ENCODE measurements at regions of chr6 and their contacts with region 1.

Region 1: DNA sequence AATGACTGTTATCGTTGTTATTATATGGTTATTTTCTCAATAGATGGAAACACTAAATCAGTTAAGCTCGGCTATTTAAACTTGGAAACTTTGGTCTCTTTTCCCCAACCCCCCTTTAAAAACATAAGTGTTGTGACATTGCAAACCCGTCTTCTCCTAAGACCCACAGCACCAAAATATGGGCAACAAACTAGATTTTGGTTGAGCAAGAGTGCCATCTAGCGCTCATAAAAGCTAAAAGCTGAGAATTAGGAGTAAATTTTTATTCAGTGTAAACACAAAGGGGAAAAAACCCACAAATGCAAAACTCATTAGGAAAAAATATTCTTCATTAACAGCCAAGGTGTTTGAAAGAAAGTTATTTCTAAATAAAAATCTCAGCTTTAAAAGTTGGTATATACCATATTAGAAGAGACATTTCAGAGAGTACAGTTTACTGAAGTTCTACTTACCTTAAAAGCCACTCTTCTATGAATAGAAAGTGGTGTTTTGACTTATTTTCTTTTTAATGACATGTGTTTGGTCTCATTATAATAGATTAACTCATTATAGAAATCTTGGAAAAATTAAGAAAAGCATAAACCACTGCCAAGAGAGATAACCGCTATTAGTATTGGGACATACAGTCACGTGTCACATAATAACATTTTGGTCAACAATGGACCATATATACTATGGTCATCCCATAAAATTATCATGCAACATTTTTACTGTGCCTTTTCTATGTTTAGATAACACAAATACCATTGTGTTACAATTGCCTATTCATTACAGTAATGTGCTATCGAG is 21.1 kb downstream of the SESN1 start:
- H3K4me3 ChIP-seq: no peak overlapping the region
- H3K27ac ChIP-seq: no peak overlapping the region
- H3K4me1 ChIP-seq: peaks cover 30% of the 10 kb centered on the region
- CTCF ChIP-seq: peak; percentile 37; the same call in 1 of the 2 replicates

Region 2: GRCh38 chr6:108541838-108542759 is 531.4 kb before region 1 on chr6:
- CTCF ChIA-PET with region 1: interaction called, 156 read pairs
- POLR2A ChIA-PET with region 1: interaction called, 3 read pairs
- H3K4me3 ChIP-seq: no peak overlapping the region
- H3K27ac ChIP-seq: no peak overlapping the region
- H3K4me1 ChIP-seq: no peaks in the 10 kb centered on the region
- CTCF ChIP-seq: peak; percentile 92

Region 3: GRCh38 chr6:108782179-108783041 is 291.1 kb before region 1 on chr6:
- CTCF ChIA-PET with region 1: interaction called, 11 read pairs
- POLR2A ChIA-PET with region 1: no interaction called
- H3K4me3 ChIP-seq: peak overlapping the region; percentile 40
- H3K27ac ChIP-seq: no peak overlapping the region; the same call in 1 of the 2 replicates
- H3K4me1 ChIP-seq: peaks cover 6% of the 10 kb centered on the region
- CTCF ChIP-seq: peak; percentile 91

Region 4: GRCh38 chr6:108896111-108896661 is 177.4 kb before region 1 on chr6:
- CTCF ChIA-PET with region 1: interaction called, 62 read pairs
- POLR2A ChIA-PET with region 1: no interaction called
- H3K4me3 ChIP-seq: no peak overlapping the region
- H3K27ac ChIP-seq: no peak overlapping the region
- H3K4me1 ChIP-seq: no peaks in the 10 kb centered on the region
- CTCF ChIP-seq: no peak

Region 5: DNA sequence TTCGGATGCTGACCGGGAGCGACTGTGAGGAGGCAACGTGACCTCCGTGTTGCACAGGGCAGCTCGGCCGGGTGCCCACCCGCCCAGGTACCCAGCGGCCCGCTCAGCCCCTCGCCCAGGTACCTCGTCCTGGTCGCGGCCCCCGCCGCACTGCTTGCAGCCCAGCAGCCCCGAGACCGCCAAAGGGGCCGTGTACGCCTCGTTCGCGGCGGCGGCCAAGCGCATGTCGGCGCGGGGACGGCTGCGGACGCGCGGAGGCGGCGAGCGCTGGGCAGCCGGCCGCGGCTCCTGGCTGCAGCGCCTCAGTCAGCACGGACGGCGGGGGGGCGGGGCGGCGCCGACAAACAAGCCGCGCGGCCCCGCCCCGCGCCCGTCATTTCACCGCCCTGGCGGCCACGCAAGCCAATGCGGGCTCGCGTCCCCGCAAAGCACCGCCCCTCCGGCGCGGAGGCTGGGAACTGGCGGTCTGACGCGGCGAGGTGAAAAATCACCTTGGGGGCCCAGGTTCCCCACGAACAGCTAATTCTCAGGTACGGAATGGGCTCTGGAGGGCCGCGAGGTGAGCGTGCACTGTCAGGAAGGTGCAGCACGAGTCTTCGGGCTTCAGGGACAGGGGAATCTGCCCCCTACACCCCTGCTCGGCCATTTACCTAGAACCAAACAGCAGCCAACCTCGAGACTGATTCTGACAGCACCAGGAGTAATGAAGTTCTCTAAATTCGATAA is 64.1 kb before region 1 on chr6:
- CTCF ChIA-PET with region 1: interaction called, 10 read pairs
- POLR2A ChIA-PET with region 1: interaction called, 3 read pairs
- H3K4me3 ChIP-seq: peak overlapping the region; percentile 97
- H3K27ac ChIP-seq: peak overlapping the region; percentile 97
- H3K4me1 ChIP-seq: peaks cover 26% of the 10 kb centered on the region
- CTCF ChIP-seq: peak; percentile 4; the same call in 1 of the 2 replicates

Region 6: GRCh38 chr6:109062767-109063352 is 10.7 kb before region 1 on chr6:
- CTCF ChIA-PET with region 1: interaction called, 12 read pairs
- POLR2A ChIA-PET with region 1: no interaction called
- H3K4me3 ChIP-seq: no peak overlapping the region
- H3K27ac ChIP-seq: no peak overlapping the region
- H3K4me1 ChIP-seq: no peaks in the 10 kb centered on the region
- CTCF ChIP-seq: no peak